ENCODE measurements at regions of chr1 and their contacts with region 1.

Region 1: GRCh38 chr1:89762779-89763648 is 57.8 kb upstream of the LRRC8D start:
- DNase-seq: peak; percentile 94

Region 2: DNA sequence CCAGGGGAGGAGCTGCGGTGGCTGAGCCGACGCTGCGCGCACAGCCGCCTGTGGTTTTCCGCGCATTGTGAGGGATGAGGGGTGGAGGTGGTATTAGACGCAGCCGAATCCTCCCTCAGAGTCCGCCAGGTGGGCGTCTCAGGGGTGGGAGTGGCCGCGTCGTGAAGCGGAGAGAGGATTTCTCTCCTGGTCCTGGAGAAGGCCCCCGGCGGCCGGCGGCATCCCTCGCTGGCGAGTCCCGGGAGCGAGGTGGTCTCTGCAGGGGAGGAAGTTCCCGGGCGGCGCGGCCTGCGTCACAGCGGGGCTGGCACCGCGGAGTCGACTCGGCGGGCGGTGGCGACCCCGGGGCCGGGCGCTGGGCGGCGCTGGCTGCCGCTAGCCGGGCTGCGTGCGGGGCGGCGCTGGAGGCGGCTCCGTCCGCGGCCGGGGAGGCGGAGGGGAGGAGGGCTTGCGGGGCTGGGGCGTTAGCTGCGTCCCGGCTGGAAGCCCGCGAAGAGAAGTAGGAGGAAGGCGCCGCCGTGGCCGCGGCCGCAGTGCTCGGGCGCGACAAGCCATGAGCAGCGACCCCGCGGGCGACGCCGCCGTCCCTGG is 130.3 kb before region 1 on chr1 and contains the start of gene LRRC8C:
- CTCF ChIA-PET with region 1: interaction called, 19 read pairs
- POLR2A ChIA-PET with region 1: interaction called, 12 read pairs
- DNase-seq: peak; percentile 89

Region 3: DNA sequence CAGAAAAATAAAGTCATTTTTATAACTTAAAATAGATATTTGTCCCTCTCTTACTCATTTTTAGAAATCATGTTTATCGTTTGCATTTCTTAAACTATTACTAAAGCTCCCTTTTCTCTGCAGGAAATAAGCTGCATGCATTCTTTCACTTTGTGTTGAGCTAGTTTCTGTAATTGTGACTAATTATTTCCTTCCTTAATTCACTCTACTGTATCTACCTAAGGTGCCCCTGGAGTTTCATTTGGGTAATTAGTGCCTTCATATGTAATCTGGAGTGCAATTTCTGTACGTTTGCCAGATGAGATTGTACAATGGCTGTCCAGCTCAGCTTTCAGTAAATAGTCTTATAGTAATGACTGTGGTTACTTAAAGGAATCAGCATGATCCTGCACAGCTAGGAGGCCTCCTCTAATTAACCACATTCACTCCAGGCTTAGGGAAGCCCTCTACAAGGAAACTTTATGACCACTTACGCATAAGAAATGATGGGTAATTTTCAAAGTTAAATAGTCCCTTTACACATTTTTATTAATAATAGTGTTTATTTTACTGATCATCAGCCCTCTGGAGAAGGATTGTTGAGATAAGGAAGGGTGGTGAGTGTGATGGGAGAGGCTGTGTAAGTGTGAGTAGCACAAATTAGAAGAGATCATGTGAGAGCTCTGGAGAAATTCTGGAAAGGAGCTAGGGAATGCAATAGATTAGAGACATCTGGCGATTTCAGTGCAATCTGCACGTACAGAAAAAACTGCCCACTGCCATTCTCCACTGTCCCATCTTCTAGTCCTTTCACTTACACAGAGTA is 43.3 kb before region 1 on chr1:
- CTCF ChIA-PET with region 1: interaction called, 10 read pairs
- POLR2A ChIA-PET with region 1: no interaction called
- DNase-seq: no peak

Region 4: DNA sequence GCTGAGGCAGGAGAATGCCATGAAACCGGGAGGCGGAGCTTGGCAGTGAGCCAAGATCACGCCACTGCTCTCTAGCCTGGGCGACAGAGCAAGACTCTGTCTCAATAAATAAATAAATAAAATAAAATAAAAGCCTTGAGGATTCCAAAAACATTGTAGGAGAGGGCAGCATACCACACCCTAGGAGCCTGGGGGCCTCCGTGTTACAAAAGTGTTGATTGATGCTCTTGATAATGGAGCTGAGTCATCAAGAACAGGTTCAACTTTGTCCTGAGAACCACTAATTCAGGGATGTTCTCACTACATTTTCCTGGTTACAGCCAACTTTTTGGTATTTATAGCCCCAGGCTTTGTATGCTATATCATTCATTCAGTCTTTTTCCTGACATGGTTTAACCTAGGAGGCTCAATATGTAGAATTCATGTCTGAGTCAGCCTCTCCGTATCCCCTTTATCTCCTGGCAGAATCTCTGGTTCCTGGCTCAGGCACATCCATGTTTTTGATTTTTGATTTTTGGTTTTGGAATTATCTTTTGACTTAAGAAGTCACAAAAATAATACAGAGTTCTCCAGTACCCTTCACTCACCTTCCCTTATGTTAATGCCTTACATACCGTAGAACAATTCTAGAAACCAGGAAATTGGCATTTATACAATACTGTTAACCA is 127.2 kb after region 1 on chr1:
- CTCF ChIA-PET with region 1: no interaction called
- POLR2A ChIA-PET with region 1: no interaction called
- DNase-seq: peak; percentile 47

Measured in HEK293T (cell line).